WTC11 (cell line): ENCODE measurements at regions of chr9 and their contacts with region 1.

Region 1: DNA sequence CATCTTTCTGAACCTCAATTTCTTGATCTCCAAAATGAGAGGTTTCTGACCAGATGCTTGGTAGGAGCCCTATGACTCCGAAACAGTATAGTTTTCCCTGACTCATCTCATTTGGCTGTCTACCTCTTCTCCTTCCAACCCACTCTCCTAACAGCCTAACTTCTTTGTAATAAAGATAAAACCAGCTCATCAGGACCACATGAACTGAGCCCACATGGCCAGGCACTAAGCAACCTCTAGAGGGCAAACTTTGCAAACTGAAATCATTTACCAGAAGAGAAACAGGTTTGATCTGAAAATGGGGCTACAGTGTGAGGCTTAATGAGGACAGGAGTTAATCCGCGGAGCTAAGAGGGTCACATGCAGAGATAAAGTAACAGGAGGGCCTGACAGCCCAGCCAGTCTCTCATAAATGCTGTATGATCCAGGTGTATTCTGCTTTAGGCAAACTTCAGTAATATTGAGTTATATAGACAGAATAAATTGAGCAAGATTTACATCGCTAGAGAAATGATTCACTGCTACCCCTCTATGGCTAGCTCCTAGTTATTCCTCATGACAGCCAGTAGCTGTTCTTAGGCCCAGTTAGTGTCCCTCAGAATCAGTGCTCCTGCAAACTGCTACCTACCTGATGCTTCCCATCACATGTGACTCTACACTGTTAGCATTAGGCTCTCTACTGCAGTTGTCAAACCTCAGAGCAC is 64.6 kb downstream of the ABCA1 start:
- DNase-seq: peak; percentile 54
- ATAC-seq: peak; percentile 88
- H3K4me3 Mint-ChIP-seq: peak overlapping the region; percentile 34; the same call in 1 of the 2 replicates
- H3K27ac Mint-ChIP-seq: peak overlapping the region; percentile 79
- H3K4me1 Mint-ChIP-seq: peaks cover 44% of the 10 kb centered on the region
- H3K27me3 Mint-ChIP-seq: no peaks in the 10 kb centered on the region; the same call in 1 of the 2 replicates
- CTCF ChIP-seq: peak; percentile 41

Region 2: DNA sequence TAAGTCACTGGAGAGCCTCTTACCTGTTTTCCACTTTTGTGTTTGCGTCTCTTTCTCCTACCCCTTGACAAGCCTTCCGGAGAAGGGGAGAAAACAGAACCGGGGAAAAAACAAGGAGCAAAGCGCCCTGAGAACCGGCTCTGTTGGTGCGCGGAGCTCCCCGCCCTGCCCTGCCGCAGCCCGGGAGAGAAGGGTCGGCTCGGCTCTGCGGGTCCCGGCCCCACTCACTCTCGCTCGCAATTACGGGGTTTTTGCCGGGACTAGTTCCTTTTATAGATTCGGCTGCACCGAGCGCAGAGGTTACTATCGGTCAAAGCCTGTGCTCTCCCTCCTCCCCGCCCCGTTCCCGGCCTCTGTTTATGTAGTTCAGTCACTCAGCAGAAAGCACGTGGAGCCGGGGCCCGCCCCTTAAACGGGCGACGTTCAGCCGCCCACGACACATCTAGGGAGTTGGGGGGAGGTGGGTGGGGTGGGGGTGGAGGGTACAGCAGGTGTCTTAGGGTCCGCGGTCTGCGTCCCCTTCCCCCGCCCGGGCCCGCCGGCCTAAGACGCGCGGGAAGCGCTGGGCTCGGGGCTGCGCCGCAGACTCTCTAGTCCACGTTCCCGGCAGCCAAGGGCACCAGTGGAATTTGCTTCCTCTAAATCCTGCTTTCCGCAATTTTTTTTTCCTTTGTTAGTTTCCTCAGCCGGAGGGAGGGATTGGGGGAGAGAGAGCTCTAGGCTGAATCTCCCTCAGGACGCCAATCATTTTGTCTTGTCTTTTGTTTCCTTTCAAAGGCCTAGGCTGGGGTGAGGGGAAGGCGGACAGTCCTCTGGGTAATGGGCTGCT is 64.8 kb after region 1 on chr9 and contains the start of gene ABCA1:
- CTCF ChIA-PET with region 1: interaction called, 54 read pairs
- POLR2A ChIA-PET with region 1: interaction called, 33 read pairs
- DNase-seq: peak; percentile 87
- ATAC-seq: peak; percentile 55
- H3K4me3 Mint-ChIP-seq: peak within 1 kb of the TSS; percentile 95
- H3K27ac Mint-ChIP-seq: peak within 1 kb of the TSS; percentile 94
- H3K4me1 Mint-ChIP-seq: peaks cover 27% of the 10 kb centered on the region
- H3K27me3 Mint-ChIP-seq: peaks cover 20% of the 10 kb centered on the region
- CTCF ChIP-seq: no peak
- total RNA-seq, gene ABCA1: 4.6 to 7.8 TPM (median 5.8 TPM) in 3 replicates

Region 3: DNA sequence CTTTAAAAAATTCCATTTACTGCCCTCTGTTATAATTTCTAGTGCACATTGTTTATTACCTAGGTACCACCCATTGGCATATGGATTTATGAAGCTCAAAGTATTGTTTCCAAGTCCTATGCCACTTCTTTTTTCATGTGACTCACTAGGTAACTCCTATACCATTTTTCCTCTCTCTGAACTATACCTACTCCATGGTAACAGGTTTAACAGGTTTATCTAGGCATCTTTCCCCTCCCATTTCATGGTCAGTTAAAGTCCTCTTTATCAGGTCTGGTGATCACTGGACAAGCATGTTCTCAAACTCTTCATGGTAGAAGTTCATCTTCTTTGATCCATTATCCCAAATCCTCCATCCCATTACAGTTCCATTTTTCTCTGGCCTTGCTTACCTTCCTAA is 114.3 kb after region 1 on chr9:
- CTCF ChIA-PET with region 1: no interaction called
- POLR2A ChIA-PET with region 1: no interaction called
- DNase-seq: no peak
- ATAC-seq: no peak
- H3K4me3 Mint-ChIP-seq: no peak overlapping the region
- H3K27ac Mint-ChIP-seq: no peak overlapping the region
- H3K4me1 Mint-ChIP-seq: peaks cover 3% of the 10 kb centered on the region; the same call in 1 of the 2 replicates
- H3K27me3 Mint-ChIP-seq: no peaks in the 10 kb centered on the region
- CTCF ChIP-seq: no peak

Region 4: GRCh38 chr9:104991144-104991953 is 128.0 kb after region 1 on chr9:
- CTCF ChIA-PET with region 1: interaction called, 21 read pairs
- POLR2A ChIA-PET with region 1: interaction called, 16 read pairs
- DNase-seq: peak; percentile 86
- ATAC-seq: peak; percentile 52
- H3K4me3 Mint-ChIP-seq: peak overlapping the region; percentile 80
- H3K27ac Mint-ChIP-seq: peak overlapping the region; percentile 92
- H3K4me1 Mint-ChIP-seq: peaks cover 44% of the 10 kb centered on the region
- H3K27me3 Mint-ChIP-seq: peaks cover 54% of the 10 kb centered on the region
- CTCF ChIP-seq: no peak

Region 5: GRCh38 chr9:105154723-105155191 is 291.4 kb after region 1 on chr9:
- CTCF ChIA-PET with region 1: interaction called, 14 read pairs
- POLR2A ChIA-PET with region 1: no interaction called
- DNase-seq: no peak
- ATAC-seq: peak; percentile 20; the same call in 1 of the 2 replicates
- H3K4me3 Mint-ChIP-seq: no peak overlapping the region
- H3K27ac Mint-ChIP-seq: no peak overlapping the region
- H3K4me1 Mint-ChIP-seq: peaks cover 13% of the 10 kb centered on the region
- H3K27me3 Mint-ChIP-seq: no peaks in the 10 kb centered on the region
- CTCF ChIP-seq: no peak

Region 6: DNA sequence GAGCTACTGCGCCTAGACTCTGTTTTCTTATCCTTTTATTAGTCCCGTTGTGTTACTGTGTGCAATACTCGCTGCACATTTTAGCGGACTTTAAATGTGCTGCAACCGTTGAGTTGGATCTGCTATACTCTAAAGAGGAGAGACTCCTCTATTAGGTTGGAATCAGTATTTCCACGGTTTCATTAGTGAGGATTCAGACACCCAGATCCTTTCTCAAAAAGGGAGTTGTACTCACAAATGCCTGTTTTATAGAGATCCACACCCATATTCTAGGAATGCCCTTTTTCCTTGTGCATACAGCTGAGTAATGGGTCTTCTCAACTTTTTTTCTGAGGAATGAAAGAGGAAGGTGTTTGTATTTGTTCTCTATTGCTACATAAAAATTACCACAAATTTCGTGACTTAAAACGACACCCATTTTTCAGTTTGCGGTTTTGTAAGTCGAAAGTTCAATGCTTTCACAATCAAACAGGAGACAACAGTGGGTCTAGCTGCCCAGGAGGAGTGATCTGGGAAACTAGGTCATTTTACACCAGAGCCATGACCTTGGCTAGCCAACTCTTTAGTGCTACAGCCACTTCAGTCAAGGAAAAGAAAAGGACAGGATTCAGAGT is 328.3 kb after region 1 on chr9:
- CTCF ChIA-PET with region 1: no interaction called
- POLR2A ChIA-PET with region 1: no interaction called
- DNase-seq: no peak
- ATAC-seq: no peak
- H3K4me3 Mint-ChIP-seq: no peak overlapping the region
- H3K27ac Mint-ChIP-seq: peak overlapping the region; percentile 57; the same call in 1 of the 2 replicates
- H3K4me1 Mint-ChIP-seq: peaks cover 3% of the 10 kb centered on the region; the same call in 1 of the 2 replicates
- H3K27me3 Mint-ChIP-seq: no peaks in the 10 kb centered on the region
- CTCF ChIP-seq: no peak